ENCODE measurements at regions of chr5 and their contacts with region 1.

Region 1: GRCh38 chr5:43422143-43422542 is 10.0 kb upstream of the CCL28 start:
- DNase-seq: no peak
- ATAC-seq: no peak
- H3K4me3 ChIP-seq: no peak overlapping the region
- H3K4me3 Mint-ChIP-seq: no peak overlapping the region
- H3K27ac ChIP-seq: no peak overlapping the region
- H3K27ac Mint-ChIP-seq: no peak overlapping the region
- H3K4me1 ChIP-seq: no peaks in the 10 kb centered on the region
- H3K4me1 Mint-ChIP-seq: no peaks in the 10 kb centered on the region
- H3K27me3 ChIP-seq: peaks cover 0 to 6% of the 10 kb centered on the region in 2 experiments
- H3K27me3 Mint-ChIP-seq: peaks cover 0 to 1% of the 10 kb centered on the region in 2 donors

Region 2: GRCh38 chr5:43409809-43410271 is 12.3 kb before region 1 on chr5:
- CTCF ChIA-PET with region 1: no interaction called
- POLR2A ChIA-PET with region 1: no interaction called
- DNase-seq: no peak
- ATAC-seq: no peak
- H3K4me3 ChIP-seq: no peak overlapping the region
- H3K4me3 Mint-ChIP-seq: no peak overlapping the region
- H3K27ac ChIP-seq: no peak overlapping the region
- H3K27ac Mint-ChIP-seq: no peak overlapping the region
- H3K4me1 ChIP-seq: no peaks in the 10 kb centered on the region
- H3K4me1 Mint-ChIP-seq: no peaks in the 10 kb centered on the region
- H3K27me3 ChIP-seq: no peaks in the 10 kb centered on the region
- H3K27me3 Mint-ChIP-seq: no peaks in the 10 kb centered on the region

Region 3: DNA sequence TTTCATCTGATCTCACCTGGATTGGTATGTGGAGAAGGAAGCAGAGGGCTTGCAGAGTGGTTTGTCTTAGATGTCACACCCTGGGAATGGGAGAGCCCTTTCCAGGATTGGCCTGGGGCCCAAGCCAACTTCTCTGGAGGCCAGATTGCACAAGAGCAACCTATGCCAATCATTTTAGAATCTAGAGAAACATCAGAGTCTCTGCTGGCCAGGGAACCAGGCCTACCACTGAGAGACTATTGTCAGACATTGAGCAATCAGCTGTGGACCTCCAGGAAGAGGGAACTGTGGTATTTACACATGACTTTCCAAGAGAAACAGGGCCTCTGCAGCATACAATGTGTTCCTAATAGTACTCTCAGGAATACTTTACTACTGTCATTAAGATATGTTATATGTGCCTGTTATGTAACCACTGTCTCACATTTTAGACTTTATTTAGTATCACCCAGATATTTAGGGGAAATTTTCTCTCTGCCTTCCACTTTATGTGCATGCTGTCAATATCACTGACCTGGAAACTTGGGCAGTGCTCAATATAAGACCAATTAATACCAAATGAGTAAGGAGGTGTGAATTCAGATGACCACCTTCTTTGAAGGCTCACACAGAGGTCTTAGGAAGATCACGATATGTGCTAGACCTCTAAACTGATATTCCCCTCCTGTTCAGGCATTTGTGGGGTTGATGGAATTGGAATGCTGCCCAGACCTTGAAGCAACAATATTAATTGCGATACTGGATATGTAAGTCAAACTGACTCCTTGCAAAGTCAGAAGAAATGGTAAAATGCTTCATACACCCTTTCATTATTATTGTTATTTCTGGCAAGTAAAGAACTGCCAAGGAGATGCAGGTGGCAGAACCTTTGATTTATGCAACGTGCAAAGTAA is 10.6 kb after region 1 on chr5:
- CTCF ChIA-PET with region 1: no interaction called
- POLR2A ChIA-PET with region 1: no interaction called
- DNase-seq: no peak
- ATAC-seq: no peak
- H3K4me3 ChIP-seq: no peak overlapping the region
- H3K4me3 Mint-ChIP-seq: no peak overlapping the region
- H3K27ac ChIP-seq: no peak overlapping the region
- H3K27ac Mint-ChIP-seq: no peak overlapping the region
- H3K4me1 ChIP-seq: no peaks in the 10 kb centered on the region
- H3K4me1 Mint-ChIP-seq: no peaks in the 10 kb centered on the region
- H3K27me3 ChIP-seq: no peaks in the 10 kb centered on the region
- H3K27me3 Mint-ChIP-seq: no peaks in the 10 kb centered on the region

Region 4: DNA sequence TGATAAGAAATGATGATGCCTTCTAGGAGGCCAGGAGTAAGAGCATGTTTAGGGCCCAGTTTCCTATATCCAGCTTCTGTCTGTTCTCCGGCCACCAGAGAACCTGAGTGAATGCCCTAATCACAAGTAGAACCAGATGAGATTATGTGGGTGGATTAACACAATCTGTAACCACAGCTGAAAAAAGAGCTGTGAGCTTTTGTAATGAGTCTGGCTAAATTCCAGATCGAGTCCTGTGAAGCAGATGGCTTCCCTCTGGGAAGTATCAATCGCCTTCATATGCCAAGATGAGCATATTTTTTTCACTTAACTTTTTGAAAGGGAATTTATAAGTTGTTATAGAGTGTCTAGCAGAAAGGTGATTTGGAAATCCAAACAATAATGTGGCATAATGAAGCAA is 280.7 kb after region 1 on chr5:
- CTCF ChIA-PET with region 1: no interaction called
- POLR2A ChIA-PET with region 1: interaction called in 1 of 2 experiments, 13 read pairs
- DNase-seq: no peak
- ATAC-seq: no peak
- H3K4me3 ChIP-seq: no peak overlapping the region
- H3K4me3 Mint-ChIP-seq: no peak overlapping the region
- H3K27ac ChIP-seq: no peak overlapping the region
- H3K27ac Mint-ChIP-seq: no peak overlapping the region
- H3K4me1 ChIP-seq: no peaks in the 10 kb centered on the region
- H3K4me1 Mint-ChIP-seq: peaks cover 0 to 1% (median 0%) of the 10 kb centered on the region in 3 donors
- H3K27me3 ChIP-seq: no peaks in the 10 kb centered on the region
- H3K27me3 Mint-ChIP-seq: no peaks in the 10 kb centered on the region

Measured in T-cell (primary cell).